Activated CD4-positive, alpha-beta T cell treated with anti-CD3 and anti-CD28 coated beads for 36 hours (primary cell): ENCODE measurements at regions of chr2 and their contacts with region 1.

Region 1: GRCh38 chr2:160194946-160195345 is 5.1 kb downstream of the ITGB6 start:
- DNase-seq: no peak
- ATAC-seq: no peak
- H3K4me3 Mint-ChIP-seq: no peak overlapping the region
- H3K27ac Mint-ChIP-seq: no peak overlapping the region
- H3K4me1 Mint-ChIP-seq: peaks cover 6% of the 10 kb centered on the region
- H3K27me3 Mint-ChIP-seq: no peaks in the 10 kb centered on the region

Region 2: DNA sequence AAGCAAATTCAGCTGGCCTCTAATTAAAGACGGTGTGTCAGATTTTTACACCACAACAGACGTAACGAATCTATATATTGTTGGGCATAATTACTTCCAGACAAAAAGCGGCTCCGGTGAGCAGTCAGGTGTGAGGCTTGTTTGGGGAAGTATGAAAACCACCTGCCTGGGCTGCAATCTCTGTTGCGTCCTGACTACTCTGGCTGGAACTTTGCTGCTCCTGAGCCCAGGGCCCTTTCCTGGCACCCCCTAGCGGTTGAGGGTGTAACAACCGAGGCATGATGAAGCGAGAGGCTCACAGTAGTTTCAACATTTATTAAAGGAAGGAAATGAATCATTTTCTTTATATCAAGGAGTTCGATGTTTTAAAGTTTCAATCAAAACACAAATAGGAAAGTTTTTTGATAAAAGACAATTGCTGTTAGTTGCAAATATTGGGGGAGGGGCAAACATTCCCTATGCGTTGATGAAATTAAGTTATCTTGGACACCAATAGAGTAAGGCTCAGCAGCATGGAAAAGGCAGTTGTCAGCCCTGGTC is 15.7 kb after region 1 on chr2:
- CTCF ChIA-PET with region 1: interaction called, 11 read pairs
- POLR2A ChIA-PET with region 1: no interaction called
- intact Hi-C with region 1: no loop called
- DNase-seq: peak; percentile 88
- ATAC-seq: peak; percentile 90
- H3K4me3 Mint-ChIP-seq: no peak overlapping the region
- H3K27ac Mint-ChIP-seq: no peak overlapping the region
- H3K4me1 Mint-ChIP-seq: peaks cover 33% of the 10 kb centered on the region
- H3K27me3 Mint-ChIP-seq: peaks cover 6% of the 10 kb centered on the region